HAP-1 (cell line): ENCODE measurements at regions of chr22 and their contacts with region 1.

Region 1: GRCh38 chr22:40641269-40641668 is 4.8 kb upstream of the MRTFA start:
- DNase-seq: no peak
- H3K4me3 ChIP-seq: no peak overlapping the region
- H3K4me1 ChIP-seq: peaks cover 3% of the 10 kb centered on the region; the same call in 1 of the 2 replicates
- H3K27me3 ChIP-seq: no peaks in the 10 kb centered on the region

Region 2: DNA sequence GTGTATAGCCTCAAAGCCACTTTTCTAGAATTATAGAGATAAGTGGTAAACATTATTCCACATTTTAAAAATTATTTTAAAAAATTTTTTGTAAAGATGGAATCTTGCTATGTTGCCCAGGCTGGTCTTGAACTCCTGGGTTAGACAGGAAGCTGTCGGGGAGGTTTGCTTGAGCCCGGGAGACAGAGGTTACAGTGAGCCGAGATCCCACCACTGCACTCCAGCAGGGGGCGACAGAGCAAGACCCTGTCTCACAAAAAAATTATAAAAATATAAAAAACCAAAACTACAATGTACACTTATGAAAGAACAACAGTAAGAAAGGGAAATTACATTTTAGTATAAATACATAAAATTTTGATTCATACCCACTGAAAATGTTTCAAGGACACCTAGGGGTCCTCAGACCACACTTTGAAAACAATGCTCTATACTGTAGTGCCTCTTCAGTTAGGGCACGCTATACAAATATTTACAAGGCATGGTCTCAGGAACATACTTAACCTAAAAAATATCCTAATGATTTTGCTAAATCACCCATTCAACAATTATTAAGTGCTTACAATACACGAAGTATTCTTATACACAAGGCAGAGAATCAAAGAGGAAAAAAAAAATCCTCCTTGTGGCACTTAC is 115.9 kb before region 1 on chr22:
- in situ Hi-C with region 1: loop called (anchors 5 kb)
- DNase-seq: peak in 1 of 2 experiments; percentile 73
- H3K4me3 ChIP-seq: no peak overlapping the region
- H3K4me1 ChIP-seq: no peaks in the 10 kb centered on the region
- H3K27me3 ChIP-seq: no peaks in the 10 kb centered on the region